ENCODE measurements at regions of chr11 and their contacts with region 1.

Region 1: DNA sequence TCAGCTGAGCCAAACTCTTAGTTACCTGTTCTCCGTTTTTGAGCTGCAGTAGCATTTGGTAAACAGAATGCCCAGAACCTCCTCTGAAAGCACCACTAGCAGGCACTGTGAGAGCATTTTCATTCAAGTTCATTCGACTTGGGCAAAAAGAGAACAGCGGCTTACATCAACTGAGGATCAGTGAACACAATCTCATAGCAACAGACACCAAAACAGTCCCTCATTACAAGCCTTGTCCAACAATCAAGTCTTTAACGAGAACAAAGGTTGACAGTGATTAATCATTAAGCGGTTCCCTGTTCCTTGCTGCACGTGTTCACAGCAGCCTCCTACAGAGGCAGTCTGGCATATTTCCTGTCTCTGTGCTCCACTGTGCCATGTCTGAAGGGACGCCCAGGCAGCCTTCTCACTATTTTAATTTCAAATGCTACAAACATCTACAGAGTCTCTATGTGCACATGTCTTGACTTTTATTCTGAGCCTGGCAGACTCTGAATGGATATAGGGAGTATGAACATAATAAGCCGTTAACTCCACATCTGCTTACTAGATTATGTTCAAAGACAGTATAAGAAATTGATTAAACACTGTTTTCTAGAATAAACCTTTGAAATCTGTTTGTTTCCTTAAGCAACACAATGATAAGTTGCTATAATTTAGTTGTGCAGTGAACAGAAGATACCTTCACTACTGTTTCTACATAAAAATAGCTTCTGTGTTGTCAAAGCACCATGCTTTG is 88.3 kb upstream of the MTMR2 start:
- DNase-seq: peak; percentile 25 to 84 (median 61)
- ATAC-seq: peak; percentile 73
- H3K4me3 ChIP-seq: no peak overlapping the region
- H3K4me3 Mint-ChIP-seq: peak overlapping the region; percentile 33
- H3K27ac ChIP-seq: peak overlapping the region; percentile 48 to 49
- H3K27ac Mint-ChIP-seq: peak overlapping the region; percentile 94
- H3K4me1 ChIP-seq: peaks cover 55% of the 10 kb centered on the region
- H3K4me1 Mint-ChIP-seq: peaks cover 17% of the 10 kb centered on the region
- H3K27me3 ChIP-seq: no peaks in the 10 kb centered on the region
- H3K27me3 Mint-ChIP-seq: no peaks in the 10 kb centered on the region
- CTCF ChIP-seq: peak; percentile 52

Region 2: DNA sequence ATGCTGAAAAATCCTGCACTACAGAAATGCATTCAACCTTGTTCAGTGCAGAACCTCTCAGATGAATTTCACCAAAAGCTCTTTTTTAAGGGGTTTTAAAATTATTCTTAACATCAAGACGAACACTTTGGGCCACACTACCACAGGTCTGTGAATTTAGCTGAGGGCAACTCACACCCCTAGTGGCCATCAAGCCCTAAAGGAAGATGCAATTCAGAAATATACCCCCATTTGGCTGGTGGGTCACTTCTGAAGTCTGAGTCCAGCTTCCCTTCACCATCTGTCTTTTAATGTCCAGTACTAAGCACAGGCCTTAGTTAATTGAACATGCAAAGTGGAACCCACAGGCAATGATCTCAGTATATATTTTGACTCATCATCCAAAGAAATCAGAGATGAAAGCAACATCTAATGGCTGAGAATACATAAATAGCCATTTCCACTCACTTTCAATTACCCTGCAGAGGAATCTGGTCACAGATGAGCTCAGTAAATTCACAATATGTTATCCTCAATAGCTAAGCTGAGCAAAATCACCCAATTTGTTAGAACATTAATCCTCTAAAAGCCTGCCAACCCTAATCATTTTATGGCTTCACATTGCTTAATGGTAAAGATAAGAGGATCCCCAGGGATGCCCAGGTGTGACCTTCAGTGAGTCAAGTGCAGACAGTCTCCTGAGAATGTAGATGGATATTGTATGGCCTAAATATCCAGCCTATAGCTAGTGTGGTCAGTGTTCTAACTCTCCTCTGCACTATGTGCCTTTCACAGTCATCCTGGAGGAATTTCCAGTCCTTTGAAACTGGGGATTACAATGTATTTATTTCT is 272.9 kb before region 1 on chr11:
- CTCF ChIA-PET with region 1: no interaction called
- POLR2A ChIA-PET with region 1: no interaction called
- intact Hi-C with region 1: no loop called
- DNase-seq: no peak
- ATAC-seq: no peak
- H3K4me3 ChIP-seq: no peak overlapping the region
- H3K4me3 Mint-ChIP-seq: no peak overlapping the region
- H3K27ac ChIP-seq: no peak overlapping the region
- H3K27ac Mint-ChIP-seq: no peak overlapping the region
- H3K4me1 ChIP-seq: no peaks in the 10 kb centered on the region
- H3K4me1 Mint-ChIP-seq: no peaks in the 10 kb centered on the region
- H3K27me3 ChIP-seq: no peaks in the 10 kb centered on the region
- H3K27me3 Mint-ChIP-seq: peaks cover 3% of the 10 kb centered on the region
- CTCF ChIP-seq: no peak

Region 3: GRCh38 chr11:96054870-96055705 is 42.8 kb after region 1 on chr11:
- CTCF ChIA-PET with region 1: interaction called, 6 read pairs
- POLR2A ChIA-PET with region 1: no interaction called
- intact Hi-C with region 1: loop called (anchors 1 to 10 kb)
- DNase-seq: peak in 2 of 9 experiments; percentile 43 to 58
- ATAC-seq: peak; percentile 59
- H3K4me3 ChIP-seq: no peak overlapping the region
- H3K4me3 Mint-ChIP-seq: no peak overlapping the region
- H3K27ac ChIP-seq: no peak overlapping the region
- H3K27ac Mint-ChIP-seq: peak overlapping the region; percentile 58
- H3K4me1 ChIP-seq: peaks cover 16% of the 10 kb centered on the region
- H3K4me1 Mint-ChIP-seq: peaks cover 57% of the 10 kb centered on the region
- H3K27me3 ChIP-seq: no peaks in the 10 kb centered on the region
- H3K27me3 Mint-ChIP-seq: no peaks in the 10 kb centered on the region
- CTCF ChIP-seq: peak; percentile 67

Region 4: DNA sequence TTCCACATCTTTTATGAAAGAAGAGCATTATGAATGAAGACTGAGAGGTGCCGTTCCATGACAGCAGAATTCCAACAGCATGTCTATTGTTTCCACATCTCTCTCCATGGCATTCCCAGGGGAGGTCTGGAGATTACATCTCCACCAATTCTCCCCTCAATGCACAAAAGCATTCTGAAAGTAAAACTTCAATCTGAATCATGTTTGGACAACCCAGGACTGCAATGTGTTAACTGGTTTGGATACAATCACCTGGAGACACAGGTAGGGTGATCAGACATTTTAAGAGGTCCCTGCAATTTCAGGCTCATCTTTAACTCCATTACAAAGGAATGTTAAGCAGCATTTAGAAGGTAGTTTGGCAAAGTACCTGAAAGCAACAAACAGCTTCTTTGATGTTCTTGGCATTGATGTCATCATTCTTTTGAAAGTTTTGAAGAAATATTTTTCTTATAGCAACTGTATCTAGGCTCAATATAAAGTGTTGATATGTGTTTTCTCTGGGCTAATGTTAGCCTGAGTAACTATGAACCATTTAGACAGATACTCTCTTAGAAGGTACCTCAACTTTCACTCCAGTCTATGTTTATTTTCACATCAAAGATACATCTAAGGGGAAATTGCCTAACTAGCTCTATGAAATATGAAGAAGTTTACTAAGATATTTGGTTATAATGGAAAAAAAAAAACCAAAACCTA is 93.1 kb after region 1 on chr11:
- CTCF ChIA-PET with region 1: no interaction called
- POLR2A ChIA-PET with region 1: no interaction called
- intact Hi-C with region 1: loop called in 1 of 2 experiments (anchors 5 kb)
- DNase-seq: peak in 2 of 9 experiments; percentile 55 to 76
- ATAC-seq: peak; percentile 91
- H3K4me3 ChIP-seq: no peak overlapping the region
- H3K4me3 Mint-ChIP-seq: peak overlapping the region; percentile 38
- H3K27ac ChIP-seq: peak overlapping the region in 1 of 2 experiments; percentile 8
- H3K27ac Mint-ChIP-seq: peak overlapping the region; percentile 93
- H3K4me1 ChIP-seq: peaks cover 25% of the 10 kb centered on the region
- H3K4me1 Mint-ChIP-seq: peaks cover 49% of the 10 kb centered on the region
- H3K27me3 ChIP-seq: no peaks in the 10 kb centered on the region
- H3K27me3 Mint-ChIP-seq: no peaks in the 10 kb centered on the region
- CTCF ChIP-seq: no peak

Region 5: GRCh38 chr11:96242971-96243647 is 230.9 kb after region 1 on chr11:
- CTCF ChIA-PET with region 1: interaction called, 4 read pairs
- POLR2A ChIA-PET with region 1: interaction called, 3 read pairs
- intact Hi-C with region 1: loop called in 1 of 2 experiments (anchors 5 kb)
- DNase-seq: peak; percentile 40 to 87 (median 71)
- ATAC-seq: peak; percentile 87
- H3K4me3 ChIP-seq: peak overlapping the region; percentile 55 to 61
- H3K4me3 Mint-ChIP-seq: peak overlapping the region; percentile 87
- H3K27ac ChIP-seq: peak overlapping the region; percentile 46 to 68
- H3K27ac Mint-ChIP-seq: peak overlapping the region; percentile 86
- H3K4me1 ChIP-seq: peaks cover 54% of the 10 kb centered on the region
- H3K4me1 Mint-ChIP-seq: peaks cover 62% of the 10 kb centered on the region
- H3K27me3 ChIP-seq: no peaks in the 10 kb centered on the region
- H3K27me3 Mint-ChIP-seq: no peaks in the 10 kb centered on the region
- CTCF ChIP-seq: no peak

Region 6: GRCh38 chr11:96389720-96390487 is 377.6 kb after region 1 on chr11 and contains the starts of genes CCDC82 and JRKL:
- CTCF ChIA-PET with region 1: interaction called, 6 read pairs
- POLR2A ChIA-PET with region 1: interaction called, 4 read pairs
- intact Hi-C with region 1: loop called (anchors 1 to 5 kb)
- DNase-seq: peak; percentile 96 to 99 (median 98)
- ATAC-seq: peak; percentile 97
- H3K4me3 ChIP-seq: peak within 1 kb of the TSS; percentile 87 to 93
- H3K4me3 Mint-ChIP-seq: peak within 1 kb of the TSS; percentile 94
- H3K27ac ChIP-seq: peak within 1 kb of the TSS; percentile 78 to 79
- H3K27ac Mint-ChIP-seq: peak within 1 kb of the TSS; percentile 96
- H3K4me1 ChIP-seq: peaks cover 15% of the 10 kb centered on the region
- H3K4me1 Mint-ChIP-seq: peaks cover 52% of the 10 kb centered on the region
- H3K27me3 ChIP-seq: no peaks in the 10 kb centered on the region
- H3K27me3 Mint-ChIP-seq: no peaks in the 10 kb centered on the region
- CTCF ChIP-seq: no peak
- total RNA-seq, gene CCDC82: 20.0 to 23.0 TPM
- total RNA-seq, gene JRKL: 2.5 to 2.6 TPM